PC-9 (cell line): ENCODE measurements at regions of chr5 and their contacts with region 1.

Region 1: DNA sequence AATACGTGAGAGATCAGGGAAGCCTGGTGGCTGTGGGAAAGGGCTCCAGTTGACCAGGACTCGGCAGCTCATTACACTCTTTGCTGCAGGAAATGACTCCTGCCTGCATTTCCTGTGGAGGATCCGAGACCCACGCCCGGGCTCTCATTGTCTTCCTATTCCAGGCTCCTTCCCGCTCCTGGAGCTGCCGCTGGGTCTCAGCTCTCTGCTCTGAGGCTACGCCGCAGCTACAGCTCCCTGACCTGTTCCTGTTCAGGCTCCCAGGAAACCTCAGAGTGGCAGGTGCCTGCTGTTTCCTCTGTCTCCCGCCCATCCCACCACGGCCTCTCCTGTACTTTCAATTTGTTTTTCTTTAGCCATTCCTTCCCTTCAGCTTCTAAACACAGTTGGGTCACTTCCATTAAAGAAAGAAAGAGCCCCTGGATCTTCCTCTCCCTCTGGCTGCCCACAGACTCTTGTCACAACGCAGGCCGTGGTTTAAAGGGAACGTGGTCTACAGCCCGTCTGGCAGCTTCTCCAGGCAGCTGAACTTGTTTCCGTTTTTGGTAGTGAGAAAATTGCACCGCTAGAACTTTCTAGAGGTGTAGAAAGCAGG is 71.5 kb downstream of the IL6ST start:
- DNase-seq: peak in 1 of 2 experiments; percentile 29
- H3K4me3 ChIP-seq: no peak overlapping the region
- H3K27ac ChIP-seq: no peak overlapping the region
- H3K4me1 ChIP-seq: no peaks in the 10 kb centered on the region
- H3K27me3 ChIP-seq: no peaks in the 10 kb centered on the region
- CTCF ChIP-seq: no peak

Region 2: DNA sequence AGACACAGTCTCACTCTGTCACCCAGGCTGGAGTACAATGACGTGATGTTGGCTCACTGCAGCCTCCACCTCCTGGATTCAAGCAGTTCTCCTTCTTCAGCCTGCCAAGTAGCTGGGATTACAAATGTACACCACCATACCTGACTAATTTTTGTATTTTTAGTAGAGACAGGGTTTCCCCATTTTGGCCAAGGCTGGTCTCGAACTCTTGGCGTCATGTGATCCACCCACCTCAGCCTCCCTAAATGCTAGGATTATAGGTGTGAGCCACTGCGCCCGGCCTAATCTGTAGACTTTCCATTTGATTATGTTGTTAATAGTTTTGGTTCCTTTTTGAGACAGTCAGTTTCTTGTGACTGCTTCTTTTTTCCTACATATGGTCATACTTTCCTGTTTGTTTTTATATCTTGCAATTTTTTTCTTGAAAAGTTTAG is 584.4 kb before region 1 on chr5:
- CTCF ChIA-PET with region 1: no interaction called
- POLR2A ChIA-PET with region 1: no interaction called
- intact Hi-C with region 1: loop called (anchors 5 kb)
- DNase-seq: no peak
- H3K4me3 ChIP-seq: no peak overlapping the region
- H3K27ac ChIP-seq: no peak overlapping the region
- H3K4me1 ChIP-seq: no peaks in the 10 kb centered on the region
- H3K27me3 ChIP-seq: no peaks in the 10 kb centered on the region
- CTCF ChIP-seq: no peak

Region 3: GRCh38 chr5:55711968-55712859 is 211.1 kb before region 1 on chr5 and contains the start of gene SLC38A9:
- CTCF ChIA-PET with region 1: no interaction called
- POLR2A ChIA-PET with region 1: no interaction called
- intact Hi-C with region 1: loop called (anchors 5 kb)
- DNase-seq: peak; percentile 83 to 95
- H3K4me3 ChIP-seq: peak within 1 kb of the TSS; percentile 66
- H3K27ac ChIP-seq: no peak within 1 kb of the TSS
- H3K4me1 ChIP-seq: peaks cover 13% of the 10 kb centered on the region; the same call in 1 of the 2 replicates
- H3K27me3 ChIP-seq: no peaks in the 10 kb centered on the region
- CTCF ChIP-seq: no peak
- total RNA-seq, gene SLC38A9: 26.6 and 26.9 TPM in 2 replicates

Region 4: GRCh38 chr5:55894135-55894534 is 29.1 kb before region 1 on chr5:
- CTCF ChIA-PET with region 1: no interaction called
- POLR2A ChIA-PET with region 1: no interaction called
- intact Hi-C with region 1: no loop called
- DNase-seq: no peak
- H3K4me3 ChIP-seq: no peak overlapping the region
- H3K27ac ChIP-seq: no peak overlapping the region
- H3K4me1 ChIP-seq: no peaks in the 10 kb centered on the region
- H3K27me3 ChIP-seq: no peaks in the 10 kb centered on the region
- CTCF ChIP-seq: no peak